Aorta (tissue), 5 donors: ENCODE measurements at regions of chr3 and their contacts with region 1.

Region 1: GRCh38 chr3:73656241-73656890 is 31.6 kb upstream of the PDZRN3 start:
- DNase-seq: no peak
- ATAC-seq: no peak
- H3K4me3 ChIP-seq: no peak overlapping the region
- H3K27ac ChIP-seq: no peak overlapping the region
- H3K4me1 ChIP-seq: no peaks in the 10 kb centered on the region
- H3K27me3 ChIP-seq: no peaks in the 10 kb centered on the region

Region 2: DNA sequence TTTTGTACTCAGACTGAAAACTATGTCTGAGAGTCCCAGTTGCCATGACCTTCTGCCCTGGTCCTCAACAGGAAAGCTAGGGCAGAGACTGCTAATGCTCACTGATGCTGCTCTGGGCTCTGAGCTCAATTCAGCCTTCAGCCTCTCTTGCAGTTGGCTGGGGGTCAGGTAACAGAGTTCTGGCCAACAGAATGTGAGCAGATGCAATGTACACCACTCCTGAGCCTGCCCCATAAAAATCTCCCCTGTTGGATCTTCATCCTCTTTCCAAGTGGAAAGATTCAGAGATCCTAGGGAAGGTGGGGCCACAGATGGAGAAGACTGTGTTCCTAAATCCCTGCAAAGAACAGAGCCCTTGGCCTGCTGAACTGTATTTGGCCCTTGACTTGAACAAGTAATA is 119.4 kb before region 1 on chr3:
- intact Hi-C with region 1: no loop called
- DNase-seq: no peak
- ATAC-seq: no peak
- H3K4me3 ChIP-seq: no peak overlapping the region
- H3K27ac ChIP-seq: no peak overlapping the region
- H3K4me1 ChIP-seq: peaks cover 6 to 8% of the 10 kb centered on the region in 2 donors
- H3K27me3 ChIP-seq: no peaks in the 10 kb centered on the region

Region 3: GRCh38 chr3:73547427-73548248 is 108.7 kb before region 1 on chr3:
- intact Hi-C with region 1: no loop called
- DNase-seq: no peak
- ATAC-seq: peak; percentile 62
- H3K4me3 ChIP-seq: no peak overlapping the region
- H3K27ac ChIP-seq: peak overlapping the region; percentile 2 to 88
- H3K4me1 ChIP-seq: peaks cover 5 to 7% of the 10 kb centered on the region in 2 donors
- H3K27me3 ChIP-seq: no peaks in the 10 kb centered on the region

Region 4: GRCh38 chr3:73719861-73720260 is 63.5 kb after region 1 on chr3:
- intact Hi-C with region 1: loop called in 1 of 2 experiments (anchors 5 kb)
- DNase-seq: peak in 1 of 2 donors; percentile 46
- ATAC-seq: no peak
- H3K4me3 ChIP-seq: peak overlapping the region; percentile 26
- H3K27ac ChIP-seq: no peak overlapping the region
- H3K4me1 ChIP-seq: peaks cover 5% of the 10 kb centered on the region in 2 donors
- H3K27me3 ChIP-seq: no peaks in the 10 kb centered on the region